Mammary epithelial cell (primary cell): ENCODE measurements at regions of chr6 and their contacts with region 1.

Region 1: GRCh38 chr6:32413427-32414047 is 6.6 kb upstream of the BTNL2 start:
- DNase-seq: peak; percentile 37
- H3K4me3 ChIP-seq: no peak overlapping the region
- H3K27ac ChIP-seq: no peak overlapping the region
- H3K4me1 ChIP-seq: peaks cover 4% of the 10 kb centered on the region
- H3K27me3 ChIP-seq: no peaks in the 10 kb centered on the region
- CTCF ChIP-seq: peak; percentile 88 to 89

Region 2: GRCh38 chr6:32244946-32245398 is 168.6 kb before region 1 on chr6:
- CTCF ChIA-PET with region 1: no interaction called
- dilution Hi-C with region 1: loop called (anchors 5 kb)
- in situ Hi-C with region 1: no loop called
- intact Hi-C with region 1: loop called (anchors 1 kb)
- DNase-seq: peak; percentile 33
- H3K4me3 ChIP-seq: no peak overlapping the region
- H3K27ac ChIP-seq: no peak overlapping the region
- H3K4me1 ChIP-seq: no peaks in the 10 kb centered on the region
- H3K27me3 ChIP-seq: no peaks in the 10 kb centered on the region
- CTCF ChIP-seq: peak; percentile 77 to 88

Region 3: GRCh38 chr6:32355018-32355417 is 58.5 kb before region 1 on chr6:
- CTCF ChIA-PET with region 1: no interaction called
- dilution Hi-C with region 1: no loop called
- in situ Hi-C with region 1: no loop called
- intact Hi-C with region 1: no loop called
- DNase-seq: no peak
- H3K4me3 ChIP-seq: no peak overlapping the region
- H3K27ac ChIP-seq: no peak overlapping the region
- H3K4me1 ChIP-seq: no peaks in the 10 kb centered on the region
- H3K27me3 ChIP-seq: peaks cover 2% of the 10 kb centered on the region
- CTCF ChIP-seq: no peak

Region 4: GRCh38 chr6:32692019-32692418 is 278.5 kb after region 1 on chr6:
- CTCF ChIA-PET with region 1: no interaction called
- dilution Hi-C with region 1: no loop called
- in situ Hi-C with region 1: loop called (anchors 5 to 10 kb)
- intact Hi-C with region 1: no loop called
- DNase-seq: peak; percentile 45
- H3K4me3 ChIP-seq: no peak overlapping the region
- H3K27ac ChIP-seq: no peak overlapping the region
- H3K4me1 ChIP-seq: no peaks in the 10 kb centered on the region
- H3K27me3 ChIP-seq: peaks cover 4% of the 10 kb centered on the region
- CTCF ChIP-seq: peak; percentile 43 to 76

Region 5: GRCh38 chr6:32785781-32786533 is 372.4 kb after region 1 on chr6:
- CTCF ChIA-PET with region 1: interaction called, 4 read pairs
- dilution Hi-C with region 1: no loop called
- in situ Hi-C with region 1: no loop called
- intact Hi-C with region 1: loop called (anchors 1 kb)
- DNase-seq: peak; percentile 57
- H3K4me3 ChIP-seq: no peak overlapping the region
- H3K27ac ChIP-seq: no peak overlapping the region
- H3K4me1 ChIP-seq: peaks cover 7% of the 10 kb centered on the region
- H3K27me3 ChIP-seq: no peaks in the 10 kb centered on the region
- CTCF ChIP-seq: peak; percentile 61 to 73

Region 6: GRCh38 chr6:32868257-32868788 is 454.8 kb after region 1 on chr6:
- CTCF ChIA-PET with region 1: no interaction called
- dilution Hi-C with region 1: no loop called
- in situ Hi-C with region 1: no loop called
- intact Hi-C with region 1: loop called (anchors 1 kb)
- DNase-seq: peak; percentile 54
- H3K4me3 ChIP-seq: no peak overlapping the region
- H3K27ac ChIP-seq: no peak overlapping the region
- H3K4me1 ChIP-seq: no peaks in the 10 kb centered on the region
- H3K27me3 ChIP-seq: peaks cover 2% of the 10 kb centered on the region
- CTCF ChIP-seq: peak; percentile 71 to 83